IMR-90 (cell line): ENCODE measurements at regions of chr15 and their contacts with region 1.

Region 1: GRCh38 chr15:43465105-43465504 is 27.9 kb downstream of the TP53BP1 start:
- DNase-seq: peak; percentile 91
- ATAC-seq: peak; percentile 87
- H3K4me3 ChIP-seq: no peak overlapping the region
- H3K27ac ChIP-seq: no peak overlapping the region
- H3K4me1 ChIP-seq: peaks cover 18% of the 10 kb centered on the region
- H3K27me3 ChIP-seq: no peaks in the 10 kb centered on the region
- CTCF ChIP-seq: no peak
- POLR2A ChIP-seq: no peak
- RAD21 ChIP-seq: no peak

Region 2: GRCh38 chr15:43235536-43235935 is 229.6 kb before region 1 on chr15:
- CTCF ChIA-PET with region 1: no interaction called
- POLR2A ChIA-PET with region 1: interaction called, 12 read pairs
- dilution Hi-C with region 1: no loop called
- in situ Hi-C with region 1: no loop called
- intact Hi-C with region 1: no loop called
- DNase-seq: no peak
- ATAC-seq: no peak
- H3K4me3 ChIP-seq: no peak overlapping the region
- H3K27ac ChIP-seq: no peak overlapping the region
- H3K4me1 ChIP-seq: no peaks in the 10 kb centered on the region
- H3K27me3 ChIP-seq: peaks cover 66% of the 10 kb centered on the region
- CTCF ChIP-seq: no peak
- POLR2A ChIP-seq: no peak
- RAD21 ChIP-seq: no peak

Region 3: GRCh38 chr15:43347114-43347513 is 118.0 kb before region 1 on chr15:
- CTCF ChIA-PET with region 1: no interaction called
- POLR2A ChIA-PET with region 1: no interaction called
- dilution Hi-C with region 1: no loop called
- in situ Hi-C with region 1: no loop called
- intact Hi-C with region 1: no loop called
- DNase-seq: no peak
- ATAC-seq: no peak
- H3K4me3 ChIP-seq: no peak overlapping the region
- H3K27ac ChIP-seq: no peak overlapping the region
- H3K4me1 ChIP-seq: no peaks in the 10 kb centered on the region
- H3K27me3 ChIP-seq: no peaks in the 10 kb centered on the region
- CTCF ChIP-seq: no peak
- POLR2A ChIP-seq: no peak
- RAD21 ChIP-seq: no peak

Region 4: DNA sequence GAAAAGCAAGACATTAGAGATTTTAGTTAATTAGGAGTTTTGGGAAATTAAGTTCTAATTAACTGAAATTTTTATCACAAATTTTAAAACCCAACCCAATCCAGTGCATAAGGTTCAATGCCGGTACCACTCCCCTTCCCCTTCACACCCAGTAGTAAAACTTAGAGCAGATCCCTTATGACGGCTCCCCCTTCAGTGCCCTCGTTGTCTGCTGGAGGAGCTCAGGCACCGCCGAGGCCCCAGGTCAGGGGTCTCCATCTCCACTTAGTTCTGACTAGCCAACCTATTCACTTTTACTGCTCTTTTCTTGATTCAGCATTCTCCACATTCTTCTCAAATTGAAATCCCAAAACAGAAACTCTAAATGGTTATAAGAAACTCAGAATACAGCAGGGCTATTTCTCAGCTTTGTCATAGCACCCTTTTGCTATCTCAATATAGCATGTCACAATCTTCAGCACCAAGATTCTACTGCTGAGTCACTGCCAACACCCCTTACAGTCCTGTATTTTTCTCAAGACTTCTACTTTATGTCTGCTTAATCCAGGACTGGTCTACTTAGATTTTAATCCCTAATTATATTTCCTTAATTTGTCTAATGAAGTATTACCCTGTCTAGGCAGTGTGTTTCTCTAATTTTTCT is 54.4 kb before region 1 on chr15:
- CTCF ChIA-PET with region 1: no interaction called
- POLR2A ChIA-PET with region 1: no interaction called
- dilution Hi-C with region 1: no loop called
- in situ Hi-C with region 1: no loop called
- intact Hi-C with region 1: loop called (anchors 5 kb)
- DNase-seq: peak; percentile 47
- ATAC-seq: peak; percentile 68
- H3K4me3 ChIP-seq: no peak overlapping the region
- H3K27ac ChIP-seq: no peak overlapping the region
- H3K4me1 ChIP-seq: no peaks in the 10 kb centered on the region
- H3K27me3 ChIP-seq: no peaks in the 10 kb centered on the region
- CTCF ChIP-seq: no peak
- POLR2A ChIP-seq: no peak
- RAD21 ChIP-seq: no peak